CD8-positive, alpha-beta T cell (primary cell): ENCODE measurements at regions of chr1 and their contacts with region 1.

Region 1: GRCh38 chr1:156625436-156626078 is 6.3 kb downstream of the HAPLN2 start:
- DNase-seq: peak; percentile 37 to 82 (median 70)
- ATAC-seq: peak; percentile 77
- H3K4me3 ChIP-seq: peak overlapping the region; percentile 26 to 46
- H3K4me3 Mint-ChIP-seq: peak overlapping the region; percentile 75
- H3K27ac ChIP-seq: no peak overlapping the region
- H3K27ac Mint-ChIP-seq: no peak overlapping the region
- H3K4me1 ChIP-seq: peaks cover 23% of the 10 kb centered on the region
- H3K4me1 Mint-ChIP-seq: peaks cover 14% of the 10 kb centered on the region
- H3K27me3 ChIP-seq: peaks cover 26 to 33% of the 10 kb centered on the region in 2 experiments
- H3K27me3 Mint-ChIP-seq: peaks cover 53% of the 10 kb centered on the region
- CTCF ChIP-seq: peak; percentile 83

Region 2: GRCh38 chr1:156643778-156644092 is 18.2 kb after region 1 on chr1:
- CTCF ChIA-PET with region 1: interaction called, 19 read pairs
- POLR2A ChIA-PET with region 1: no interaction called
- intact Hi-C with region 1: no loop called
- DNase-seq: peak in 5 of 9 experiments; percentile 20 to 59 (median 27)
- ATAC-seq: peak; percentile 78
- H3K4me3 ChIP-seq: no peak overlapping the region
- H3K4me3 Mint-ChIP-seq: no peak overlapping the region
- H3K27ac ChIP-seq: no peak overlapping the region
- H3K27ac Mint-ChIP-seq: no peak overlapping the region
- H3K4me1 ChIP-seq: peaks cover 31% of the 10 kb centered on the region
- H3K4me1 Mint-ChIP-seq: peaks cover 32% of the 10 kb centered on the region
- H3K27me3 ChIP-seq: peaks cover 35 to 45% of the 10 kb centered on the region in 2 experiments
- H3K27me3 Mint-ChIP-seq: peaks cover 74% of the 10 kb centered on the region
- CTCF ChIP-seq: no peak

Region 3: DNA sequence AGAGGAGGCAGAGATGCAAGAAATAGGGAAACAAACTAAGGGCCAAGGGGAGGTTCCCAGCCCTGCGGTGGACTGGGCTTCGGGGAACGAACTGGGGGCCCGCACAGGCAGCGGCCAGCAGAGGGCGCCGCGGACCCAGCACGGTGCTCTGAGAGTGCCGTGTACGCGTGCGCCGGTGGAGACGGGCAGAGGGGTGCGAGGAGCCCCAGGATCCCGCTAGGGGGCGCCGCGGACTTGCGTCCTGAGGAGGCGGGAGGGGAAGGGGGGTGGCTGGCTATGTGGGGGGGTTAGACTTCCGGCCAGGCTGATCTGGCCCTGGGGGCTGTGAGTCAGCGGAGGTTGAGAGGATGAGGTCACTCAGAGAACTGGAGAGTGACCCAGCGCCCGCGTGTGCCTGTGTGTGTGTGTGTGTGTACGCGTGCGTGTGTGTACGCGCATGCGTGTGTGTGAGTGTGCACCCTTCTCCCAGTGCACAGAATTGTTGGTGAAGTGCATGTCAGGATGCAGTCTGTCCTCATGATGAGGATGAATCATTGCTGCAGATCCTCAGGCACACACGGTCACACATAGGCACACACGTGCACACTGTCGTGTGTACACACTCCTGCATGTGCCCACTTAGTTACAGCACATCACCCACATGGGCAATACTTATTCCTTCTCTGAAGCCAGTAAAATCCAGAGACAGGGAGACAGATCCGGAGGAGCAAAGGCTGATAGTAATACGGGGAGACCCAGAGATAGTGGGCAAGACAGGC is 34.6 kb after region 1 on chr1:
- CTCF ChIA-PET with region 1: interaction called, 100 read pairs
- POLR2A ChIA-PET with region 1: interaction called, 4 read pairs
- intact Hi-C with region 1: loop called (anchors 1 kb)
- DNase-seq: peak; percentile 74 to 94 (median 92)
- ATAC-seq: peak; percentile 91
- H3K4me3 ChIP-seq: no peak overlapping the region
- H3K4me3 Mint-ChIP-seq: peak overlapping the region; percentile 45
- H3K27ac ChIP-seq: peak overlapping the region in 1 of 2 experiments; percentile 47
- H3K27ac Mint-ChIP-seq: no peak overlapping the region
- H3K4me1 ChIP-seq: peaks cover 44% of the 10 kb centered on the region
- H3K4me1 Mint-ChIP-seq: peaks cover 44% of the 10 kb centered on the region
- H3K27me3 ChIP-seq: peaks cover 12 to 14% of the 10 kb centered on the region in 2 experiments
- H3K27me3 Mint-ChIP-seq: peaks cover 20% of the 10 kb centered on the region
- CTCF ChIP-seq: peak; percentile 95

Region 4: GRCh38 chr1:156689035-156689952 is 63.7 kb after region 1 on chr1:
- CTCF ChIA-PET with region 1: interaction called, 17 read pairs
- POLR2A ChIA-PET with region 1: no interaction called
- intact Hi-C with region 1: no loop called
- DNase-seq: peak; percentile 55 to 85 (median 77)
- ATAC-seq: peak; percentile 97
- H3K4me3 ChIP-seq: no peak overlapping the region
- H3K4me3 Mint-ChIP-seq: no peak overlapping the region
- H3K27ac ChIP-seq: no peak overlapping the region
- H3K27ac Mint-ChIP-seq: no peak overlapping the region
- H3K4me1 ChIP-seq: peaks cover 21% of the 10 kb centered on the region
- H3K4me1 Mint-ChIP-seq: peaks cover 25% of the 10 kb centered on the region
- H3K27me3 ChIP-seq: peaks cover 18 to 19% of the 10 kb centered on the region in 2 experiments
- H3K27me3 Mint-ChIP-seq: peaks cover 41% of the 10 kb centered on the region
- CTCF ChIP-seq: peak; percentile 84

Region 5: DNA sequence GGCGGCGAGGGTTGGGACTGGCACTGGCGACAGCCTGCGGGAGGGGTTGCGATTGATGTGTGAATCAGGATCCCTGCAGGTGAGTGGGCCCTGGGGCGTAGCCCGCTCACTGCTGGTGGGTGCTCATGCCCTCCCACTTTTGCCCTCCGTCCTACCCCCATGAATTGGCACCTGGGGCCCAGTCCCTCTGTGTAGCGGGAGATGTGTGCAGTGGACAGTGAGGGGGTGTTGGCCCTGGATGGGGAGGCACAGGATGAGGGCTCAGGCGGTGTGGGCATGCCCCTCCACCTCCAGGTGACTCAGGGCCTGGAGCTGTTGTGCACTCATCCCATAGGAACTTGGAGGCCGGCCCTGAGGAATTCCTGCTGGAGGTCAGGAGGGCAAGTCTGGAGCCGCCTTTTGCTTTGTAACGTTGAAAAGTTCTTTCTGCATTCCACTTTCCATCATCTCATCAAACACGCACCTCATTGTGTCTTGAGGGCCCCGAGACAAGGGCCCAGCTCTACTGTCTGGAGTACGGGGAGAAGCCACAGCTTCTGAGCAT is 271.0 kb after region 1 on chr1:
- CTCF ChIA-PET with region 1: no interaction called
- POLR2A ChIA-PET with region 1: no interaction called
- intact Hi-C with region 1: no loop called
- DNase-seq: no peak
- ATAC-seq: no peak
- H3K4me3 ChIP-seq: no peak overlapping the region
- H3K4me3 Mint-ChIP-seq: no peak overlapping the region
- H3K27ac ChIP-seq: no peak overlapping the region
- H3K27ac Mint-ChIP-seq: no peak overlapping the region
- H3K4me1 ChIP-seq: peaks cover 14% of the 10 kb centered on the region
- H3K4me1 Mint-ChIP-seq: peaks cover 15% of the 10 kb centered on the region
- H3K27me3 ChIP-seq: peaks cover 0 to 21% of the 10 kb centered on the region in 2 experiments
- H3K27me3 Mint-ChIP-seq: peaks cover 36% of the 10 kb centered on the region
- CTCF ChIP-seq: no peak

Region 6: DNA sequence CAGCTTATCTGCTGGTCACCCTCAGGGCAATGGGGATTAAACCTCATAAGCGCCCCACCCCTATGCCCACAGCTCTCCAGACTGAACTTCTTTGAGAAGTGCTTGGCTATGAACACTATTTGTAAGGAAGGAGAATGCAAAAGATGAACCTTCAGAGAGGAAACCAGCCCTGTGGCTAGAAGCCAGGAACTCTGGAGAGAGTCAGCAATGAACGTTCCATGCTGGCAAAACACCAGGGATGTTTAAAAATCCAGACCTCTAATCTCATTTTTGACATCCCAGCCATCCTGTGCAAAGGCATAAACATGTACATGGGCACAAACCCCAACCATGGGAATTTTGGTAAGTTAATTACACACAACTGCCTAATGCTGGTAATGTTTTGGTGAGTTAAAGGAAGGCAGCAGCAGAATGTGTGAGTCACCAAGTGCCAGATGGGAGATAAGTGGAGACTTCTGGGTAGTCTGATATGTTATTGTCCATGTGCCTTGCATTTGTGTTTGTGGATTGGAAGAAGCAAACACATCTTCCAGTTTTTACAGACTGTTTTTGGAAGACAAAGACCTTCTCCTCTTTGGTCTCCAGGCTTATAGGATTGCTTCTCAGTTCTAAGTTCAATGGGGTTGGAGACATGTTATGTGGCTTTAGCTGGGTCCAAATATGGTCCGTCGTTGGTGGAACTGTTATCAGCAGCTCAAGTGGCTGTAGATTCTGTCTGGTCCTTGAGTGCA is 686.7 kb after region 1 on chr1:
- CTCF ChIA-PET with region 1: no interaction called
- POLR2A ChIA-PET with region 1: no interaction called
- intact Hi-C with region 1: no loop called
- DNase-seq: no peak
- ATAC-seq: no peak
- H3K4me3 ChIP-seq: no peak overlapping the region
- H3K4me3 Mint-ChIP-seq: no peak overlapping the region
- H3K27ac ChIP-seq: no peak overlapping the region
- H3K27ac Mint-ChIP-seq: no peak overlapping the region
- H3K4me1 ChIP-seq: no peaks in the 10 kb centered on the region
- H3K4me1 Mint-ChIP-seq: no peaks in the 10 kb centered on the region
- H3K27me3 ChIP-seq: peaks cover 0 to 4% of the 10 kb centered on the region in 2 experiments
- H3K27me3 Mint-ChIP-seq: peaks cover 44% of the 10 kb centered on the region
- CTCF ChIP-seq: no peak